RWPE1 (cell line): ENCODE measurements at regions of chr16 and their contacts with region 1.

Region 1: DNA sequence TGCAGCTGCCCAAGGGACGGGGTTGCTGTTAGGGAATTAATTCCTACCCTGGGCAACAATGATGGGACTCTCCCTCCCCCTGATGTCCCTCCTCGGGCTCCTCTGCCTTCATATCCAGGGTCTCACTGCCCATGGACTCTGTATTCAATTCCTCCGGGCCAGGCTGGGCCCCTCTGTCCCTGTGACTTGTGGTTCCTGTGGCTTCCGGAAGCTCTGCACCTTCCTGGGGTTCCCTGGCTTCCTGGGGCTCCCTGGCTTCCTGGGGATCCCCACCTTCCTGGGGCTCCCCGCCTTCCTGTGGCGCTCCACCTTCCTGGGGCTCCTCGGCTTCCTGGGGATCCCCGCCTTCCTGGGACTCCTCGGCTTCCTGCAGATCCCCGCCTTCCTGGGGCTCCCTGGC is 35.2 kb downstream of the SRL start:
- DNase-seq: no peak
- H3K27ac ChIP-seq: no peak overlapping the region
- CTCF ChIP-seq: no peak

Region 2: DNA sequence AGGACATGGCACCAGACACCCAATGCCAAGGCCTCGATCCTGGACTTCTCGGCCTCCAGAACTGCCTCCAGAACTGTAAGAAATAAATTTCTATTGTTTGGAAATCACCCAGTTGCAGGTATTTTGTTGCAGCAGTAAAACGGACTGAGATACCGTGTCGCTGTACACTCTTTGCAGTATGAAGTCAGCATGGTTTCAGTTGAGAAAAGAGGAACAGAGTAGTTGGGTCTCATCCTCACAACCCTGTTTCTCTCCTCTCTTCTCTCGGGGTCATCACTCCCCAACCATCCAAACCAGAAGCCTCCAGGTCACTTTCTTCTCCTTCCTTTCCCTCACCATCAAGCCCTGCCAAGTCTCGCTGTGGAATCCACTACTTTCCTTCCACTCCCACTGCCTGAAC is 168.2 kb before region 1 on chr16:
- CTCF ChIA-PET with region 1: no interaction called
- POLR2A ChIA-PET with region 1: no interaction called
- DNase-seq: no peak
- H3K27ac ChIP-seq: no peak overlapping the region
- CTCF ChIP-seq: no peak

Region 3: DNA sequence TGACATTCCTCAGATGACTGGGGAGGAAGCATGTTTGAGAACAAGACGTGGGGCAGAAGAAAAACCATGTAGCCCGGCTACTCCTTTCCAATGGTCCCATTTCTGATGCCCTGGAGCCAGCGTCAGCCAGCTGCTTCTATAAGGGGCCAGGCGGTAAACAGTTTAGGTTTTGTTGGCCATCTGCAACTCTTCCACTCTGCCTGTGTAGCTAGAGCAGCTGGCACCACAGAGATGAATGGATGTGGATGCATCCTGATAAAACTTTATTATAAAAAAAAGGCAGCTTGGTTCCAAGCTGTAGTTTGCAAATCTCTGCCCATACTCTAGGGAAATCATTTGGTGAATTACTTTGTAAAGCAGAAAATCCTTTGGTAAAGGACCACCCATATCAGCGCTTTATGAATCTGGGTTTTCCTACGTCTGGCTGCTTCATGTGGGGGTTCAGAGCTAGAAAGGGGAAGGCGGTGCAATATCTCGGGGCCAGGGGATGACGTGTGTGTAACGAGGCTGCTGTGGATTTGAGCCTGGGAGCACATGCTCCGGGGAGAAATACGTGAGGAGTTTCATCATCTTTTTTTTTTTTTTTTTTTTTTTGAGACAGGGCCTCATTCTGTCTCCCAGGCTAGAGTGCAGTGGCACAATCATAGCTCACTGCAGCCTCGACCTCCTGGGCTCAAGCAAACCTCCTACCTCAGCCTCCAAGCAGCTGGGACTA is 38.6 kb after region 1 on chr16:
- CTCF ChIA-PET with region 1: no interaction called
- POLR2A ChIA-PET with region 1: interaction called, 10 read pairs
- DNase-seq: no peak
- H3K27ac ChIP-seq: no peak overlapping the region
- CTCF ChIP-seq: no peak